Dorsolateral prefrontal cortex (tissue), 120 donors: ENCODE measurements at regions of chr2 and their contacts with region 1.

Region 1: DNA sequence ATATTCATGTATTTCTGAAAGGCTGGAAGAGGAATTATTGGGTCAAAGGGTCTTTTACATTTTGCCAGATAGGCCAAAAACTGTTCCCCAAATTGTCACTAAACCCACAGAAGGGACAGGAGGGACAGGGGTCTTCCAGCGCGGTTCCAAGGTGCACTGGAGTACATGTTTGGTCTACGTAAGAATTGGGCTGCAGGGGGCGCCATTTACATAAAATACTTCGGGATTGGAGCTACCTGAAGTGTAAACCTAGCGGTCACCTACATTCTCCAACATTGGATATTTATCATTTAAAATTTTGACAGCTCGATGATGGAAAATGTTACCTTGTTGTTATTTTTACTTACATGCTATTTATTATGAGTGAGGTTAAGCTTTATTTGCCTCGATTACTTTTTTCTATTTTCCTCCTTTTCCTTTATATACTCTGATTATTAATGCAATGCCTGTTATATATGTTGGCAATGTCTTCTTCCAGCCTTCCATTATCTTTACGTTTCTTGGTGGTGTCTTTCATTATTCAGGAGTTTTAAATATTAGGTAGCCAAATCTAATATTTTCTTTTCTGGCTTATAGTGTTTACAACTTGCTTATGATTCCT is 43.0 kb upstream of the RAB6C start:
- DNase-seq: peak in 4 of 10 donors; percentile 57 to 81 (median 72)
- H3K4me3 ChIP-seq: no peak overlapping the region
- H3K27ac ChIP-seq: peak overlapping the region in 11 of 59 donors; percentile 3 to 98 (median 30)
- H3K27me3 ChIP-seq: peaks cover 0 to 39% (median 3%) of the 10 kb centered on the region in 45 donors
- CTCF ChIP-seq: peak in 31 of 56 donors; percentile 38 to 84 (median 64)

Region 2: DNA sequence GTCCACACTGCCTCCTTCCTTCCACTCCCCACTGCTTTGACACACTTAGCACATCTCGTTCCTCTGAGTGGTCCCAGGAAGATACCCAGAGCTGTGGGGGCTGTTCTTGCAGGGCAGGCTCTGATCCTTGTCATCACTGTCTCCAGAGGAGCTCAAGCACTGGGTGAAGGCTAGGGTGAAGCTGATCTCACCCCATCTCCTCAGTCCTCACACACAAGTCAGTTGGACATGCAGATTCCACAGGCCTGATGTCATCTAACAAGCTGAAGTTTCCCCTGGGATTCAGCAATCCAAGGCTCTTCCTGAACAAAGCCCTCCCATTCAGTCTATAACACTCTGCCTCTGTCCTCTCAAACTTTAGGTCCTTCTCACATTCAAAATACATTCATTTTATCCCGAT is 47.5 kb before region 1 on chr2:
- intact Hi-C with region 1: no loop called
- DNase-seq: no peak
- H3K4me3 ChIP-seq: no peak overlapping the region
- H3K27ac ChIP-seq: no peak overlapping the region
- H3K27me3 ChIP-seq: peaks cover 0 to 13% (median 0%) of the 10 kb centered on the region in 45 donors
- CTCF ChIP-seq: no peak

Region 3: DNA sequence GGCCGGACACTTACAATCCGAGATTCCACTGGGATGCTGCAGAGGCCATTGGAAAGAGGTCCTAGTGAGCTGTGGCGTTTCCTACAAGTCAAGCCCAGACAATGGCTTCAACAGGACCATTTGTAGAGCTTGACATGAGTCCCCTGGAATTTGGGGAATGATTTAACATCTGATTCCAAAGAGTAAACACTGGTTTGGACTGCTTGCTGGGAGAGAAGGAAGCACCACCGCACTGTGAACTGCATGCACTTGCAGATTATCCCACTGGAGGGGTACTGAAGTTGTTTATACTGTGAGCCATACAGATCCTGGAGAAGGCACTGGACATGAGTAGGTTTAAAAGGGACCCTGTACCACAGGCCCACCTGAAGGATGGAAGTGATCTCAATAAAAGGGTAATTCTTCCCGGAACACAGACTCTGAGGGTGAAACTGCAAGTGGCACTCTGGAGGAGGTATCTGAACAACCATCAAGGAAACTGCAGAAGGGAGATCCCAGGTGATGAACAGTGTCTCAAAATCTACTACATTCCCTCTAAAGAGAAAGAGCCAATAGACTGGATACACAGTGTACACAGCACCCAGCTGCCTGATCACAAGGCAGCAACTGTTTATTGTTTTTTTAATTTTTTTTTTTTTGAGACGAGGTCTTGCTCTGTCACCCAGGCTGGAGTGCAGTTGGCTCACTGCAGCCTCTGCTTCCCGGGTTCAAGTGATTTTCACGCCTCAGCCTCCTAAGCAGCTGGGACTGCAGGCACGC is 38.8 kb after region 1 on chr2:
- intact Hi-C with region 1: loop called (anchors 2 to 5 kb)
- DNase-seq: peak in 1 of 10 donors; percentile 19
- H3K4me3 ChIP-seq: no peak overlapping the region
- H3K27ac ChIP-seq: peak overlapping the region in 56 of 59 donors; percentile 9 to 96 (median 80)
- H3K27me3 ChIP-seq: peaks cover 0 to 6% (median 0%) of the 10 kb centered on the region in 45 donors
- CTCF ChIP-seq: no peak

Region 4: DNA sequence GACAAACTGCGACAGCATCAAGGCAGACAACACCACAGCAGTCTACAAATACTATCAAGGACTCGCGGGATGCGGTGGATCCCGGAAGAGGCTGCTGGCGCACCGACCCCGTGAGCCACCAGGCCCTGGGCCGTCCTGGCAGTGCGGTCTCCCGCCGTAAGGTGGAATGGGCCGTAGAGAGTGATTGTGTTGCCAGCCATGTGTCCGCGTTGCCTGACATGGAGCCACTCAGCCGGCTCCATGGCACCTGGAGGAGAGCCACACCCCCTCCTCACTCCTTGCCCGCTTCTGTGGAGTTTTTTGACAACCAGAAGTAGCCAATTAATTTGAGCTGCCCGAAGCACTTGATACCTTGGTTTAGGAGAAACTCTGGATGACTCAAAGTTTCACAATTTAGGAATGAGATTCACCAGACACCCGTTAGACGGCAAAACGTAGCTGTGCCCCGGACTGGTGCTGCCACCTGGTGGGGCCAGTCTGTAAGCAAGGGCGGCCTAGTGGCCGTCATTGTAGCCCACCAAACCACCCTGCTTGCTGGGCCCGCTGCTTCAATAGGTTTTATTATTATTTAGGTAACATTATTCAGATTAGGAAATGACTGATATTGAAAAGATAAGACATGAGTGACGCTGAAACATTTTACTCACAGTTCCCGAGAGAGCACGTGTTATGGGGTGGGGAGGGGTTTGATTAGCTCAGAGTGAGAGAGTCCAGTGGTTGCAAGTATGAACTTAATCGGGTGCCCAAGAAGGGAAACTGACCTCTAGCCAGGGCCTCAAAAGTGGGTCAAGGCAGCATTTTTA is 396.0 kb after region 1 on chr2:
- intact Hi-C with region 1: loop called in 1 of 2 experiments (anchors 5 kb)
- DNase-seq: peak in 9 of 10 donors; percentile 54 to 81 (median 70)
- H3K4me3 ChIP-seq: peak overlapping the region in 8 of 59 donors; percentile 3 to 31 (median 16)
- H3K27ac ChIP-seq: no peak overlapping the region
- H3K27me3 ChIP-seq: peaks cover 0 to 29% (median 2%) of the 10 kb centered on the region in 45 donors
- CTCF ChIP-seq: peak; percentile 78 to 98 (median 92)